Transverse colon (tissue), 4 donors: ENCODE measurements at regions of chr3 and their contacts with region 1.

Region 1: DNA sequence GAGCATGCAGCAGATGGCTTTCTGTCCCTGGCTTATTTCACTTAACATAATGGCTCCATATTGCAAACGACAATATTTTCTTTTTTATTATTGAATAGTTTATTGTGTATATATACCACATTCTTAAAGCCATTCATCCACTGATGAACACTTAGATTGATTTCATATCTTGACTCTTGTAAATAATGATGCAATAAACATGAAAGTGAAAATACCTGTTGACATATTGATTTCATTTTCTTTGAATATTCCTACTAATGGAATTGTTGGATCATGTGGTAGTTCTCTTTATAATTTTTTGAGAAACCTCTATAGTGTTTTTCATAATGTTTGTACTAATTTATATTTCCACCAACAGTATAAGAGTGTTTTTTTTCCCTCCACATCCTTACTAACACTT is 681.6 kb downstream of the VGLL3 start:
- DNase-seq: no peak
- H3K4me3 ChIP-seq: no peak overlapping the region
- H3K27ac ChIP-seq: no peak overlapping the region
- H3K4me1 ChIP-seq: no peaks in the 10 kb centered on the region
- H3K27me3 ChIP-seq: no peaks in the 10 kb centered on the region
- CTCF ChIP-seq: no peak
- EP300 ChIP-seq: no peak
- POLR2A ChIP-seq: no peak

Region 2: DNA sequence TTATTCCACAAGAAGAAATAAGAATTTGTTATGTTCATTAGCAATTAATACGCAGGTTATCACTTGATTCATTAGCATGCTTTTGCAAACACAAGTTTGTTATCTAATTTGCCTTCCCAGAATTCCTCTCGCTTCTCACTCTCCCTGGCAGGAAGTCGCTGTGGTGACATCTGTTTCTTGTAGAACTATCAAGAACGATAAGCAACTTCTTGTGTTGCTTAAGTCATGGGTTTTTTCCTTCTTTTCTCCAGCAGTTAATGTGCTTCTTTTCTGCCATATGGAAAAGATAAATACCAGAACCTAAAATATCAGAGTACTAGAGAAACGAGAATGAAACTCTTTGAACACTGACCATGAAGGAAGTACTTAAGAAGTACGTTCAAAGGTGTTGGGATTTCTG is 817.9 kb after region 1 on chr3:
- in situ Hi-C with region 1: no loop called
- intact Hi-C with region 1: loop called (anchors 5 kb)
- DNase-seq: no peak
- H3K4me3 ChIP-seq: no peak overlapping the region
- H3K27ac ChIP-seq: no peak overlapping the region
- H3K4me1 ChIP-seq: no peaks in the 10 kb centered on the region
- H3K27me3 ChIP-seq: no peaks in the 10 kb centered on the region
- CTCF ChIP-seq: no peak
- EP300 ChIP-seq: no peak
- POLR2A ChIP-seq: no peak